ENCODE measurements at regions of chr6 and their contacts with region 1.

Region 1: DNA sequence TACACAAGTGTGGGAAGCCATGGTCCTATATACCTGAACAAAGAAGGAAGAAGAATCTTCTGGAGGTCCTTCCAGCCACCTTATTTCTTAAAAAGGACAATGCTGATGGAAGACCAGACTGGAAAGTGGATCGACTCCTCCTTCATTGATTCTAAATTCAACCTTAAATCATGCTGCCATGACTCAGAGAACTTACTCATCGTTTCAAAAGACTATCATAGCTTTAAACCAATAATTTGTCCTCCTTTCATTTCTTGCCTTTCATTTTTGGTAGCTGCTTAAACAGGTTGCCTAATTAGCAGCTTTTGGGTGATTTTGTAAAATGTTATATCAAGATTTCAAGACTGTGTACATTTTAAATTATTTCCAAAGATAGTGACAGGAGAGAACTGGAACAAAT is 60.8 kb downstream of the RTN4IP1 start:
- DNase-seq: no peak
- ATAC-seq: no peak
- H3K4me3 ChIP-seq: no peak overlapping the region
- H3K27ac ChIP-seq: no peak overlapping the region
- H3K4me1 ChIP-seq: no peaks in the 10 kb centered on the region
- H3K27me3 ChIP-seq: no peaks in the 10 kb centered on the region
- CTCF ChIP-seq: no peak

Region 2: GRCh38 chr6:106037060-106037459 is 531.5 kb before region 1 on chr6:
- intact Hi-C with region 1: no loop called
- DNase-seq: no peak
- ATAC-seq: no peak
- H3K4me3 ChIP-seq: no peak overlapping the region
- H3K27ac ChIP-seq: no peak overlapping the region
- H3K4me1 ChIP-seq: no peaks in the 10 kb centered on the region
- H3K27me3 ChIP-seq: no peaks in the 10 kb centered on the region
- CTCF ChIP-seq: no peak

Region 3: GRCh38 chr6:106444777-106445507 is 123.6 kb before region 1 on chr6:
- intact Hi-C with region 1: loop called (anchors 5 kb)
- DNase-seq: no peak
- ATAC-seq: peak; percentile 85
- H3K4me3 ChIP-seq: no peak overlapping the region
- H3K27ac ChIP-seq: no peak overlapping the region
- H3K4me1 ChIP-seq: no peaks in the 10 kb centered on the region
- H3K27me3 ChIP-seq: no peaks in the 10 kb centered on the region
- CTCF ChIP-seq: peak; percentile 78

Region 4: DNA sequence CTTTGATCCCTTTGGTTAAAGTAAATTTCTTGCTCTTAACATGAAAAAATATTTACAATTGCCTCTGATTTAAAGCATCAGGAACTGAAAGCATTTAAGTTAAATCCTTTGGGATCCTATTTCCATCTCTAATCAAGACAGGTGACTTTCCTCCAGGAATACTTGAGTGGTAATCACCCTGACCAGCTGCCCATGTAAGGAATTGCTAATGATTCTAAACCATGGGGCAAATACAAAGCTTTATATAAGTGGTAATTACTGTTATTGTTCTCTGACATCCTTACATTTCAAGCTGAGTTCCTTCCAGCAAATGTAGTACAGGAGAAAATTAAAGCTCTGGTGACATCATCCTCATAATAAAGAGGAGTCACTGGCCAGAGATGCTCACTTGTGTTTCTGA is 107.4 kb before region 1 on chr6:
- intact Hi-C with region 1: no loop called
- DNase-seq: no peak
- ATAC-seq: no peak
- H3K4me3 ChIP-seq: no peak overlapping the region
- H3K27ac ChIP-seq: no peak overlapping the region
- H3K4me1 ChIP-seq: no peaks in the 10 kb centered on the region
- H3K27me3 ChIP-seq: no peaks in the 10 kb centered on the region
- CTCF ChIP-seq: no peak